Heart right ventricle (tissue), 16 donors: ENCODE measurements at regions of chrX and their contacts with region 1.

Region 1: GRCh38 chrX:110450050-110450449 is 91.4 kb downstream of the RTL9 start:
- DNase-seq: peak; percentile 28 to 58
- ATAC-seq: peak; percentile 79 to 92 (median 88)
- H3K4me3 ChIP-seq: no peak overlapping the region
- H3K27ac ChIP-seq: no peak overlapping the region
- H3K4me1 ChIP-seq: no peaks in the 10 kb centered on the region
- H3K27me3 ChIP-seq: peaks cover 0 to 52% (median 0%) of the 10 kb centered on the region in 7 donors
- CTCF ChIP-seq: peak in 8 of 9 donors; percentile 41 to 78 (median 68)

Region 2: DNA sequence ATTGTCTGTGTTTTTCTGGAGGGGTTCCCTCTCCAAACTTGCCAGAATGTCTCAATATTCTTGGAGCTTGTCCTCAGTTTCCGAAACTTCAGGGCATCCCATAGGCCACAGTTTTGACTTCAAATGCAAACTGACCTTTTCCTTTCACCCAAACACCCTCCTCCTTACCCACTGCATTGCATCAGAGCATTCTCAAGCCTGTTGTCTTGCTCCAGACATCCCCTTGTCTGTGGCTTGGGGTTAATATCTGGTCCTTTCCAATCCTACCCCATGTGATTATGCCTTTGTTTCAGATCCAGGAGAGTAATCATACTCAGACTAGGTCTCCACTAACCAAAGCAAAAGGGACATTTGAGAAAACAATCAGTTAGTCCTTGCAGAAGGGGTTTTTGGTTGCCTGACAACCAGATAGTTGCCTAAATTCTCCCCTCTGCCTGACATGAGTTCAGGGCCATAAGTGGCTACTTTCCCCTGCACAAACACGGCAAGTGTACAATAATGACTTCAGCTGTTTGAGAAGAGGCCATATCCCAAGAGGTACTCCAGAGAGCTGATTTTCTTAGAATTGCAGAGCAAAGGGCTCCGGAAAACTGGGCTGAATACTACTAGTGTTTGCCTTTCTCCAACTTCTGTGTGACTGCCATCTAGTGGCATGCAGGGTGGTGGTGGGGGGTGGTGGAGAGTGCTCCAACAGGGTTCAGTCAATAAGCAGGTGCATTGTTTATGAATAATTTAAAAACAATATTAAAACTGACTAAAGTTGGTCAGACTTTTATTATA is 215.4 kb after region 1 on chrX:
- intact Hi-C with region 1: loop called in 2 of 10 experiments (anchors 5 to 10 kb)
- DNase-seq: peak in 1 of 2 donors; percentile 10
- ATAC-seq: peak in 6 of 8 donors; percentile 29 to 68 (median 53)
- H3K4me3 ChIP-seq: no peak overlapping the region
- H3K27ac ChIP-seq: no peak overlapping the region
- H3K4me1 ChIP-seq: no peaks in the 10 kb centered on the region
- H3K27me3 ChIP-seq: peaks cover 0 to 21% (median 0%) of the 10 kb centered on the region in 7 donors
- CTCF ChIP-seq: peak in 7 of 9 donors; percentile 30 to 55 (median 35)

Region 3: DNA sequence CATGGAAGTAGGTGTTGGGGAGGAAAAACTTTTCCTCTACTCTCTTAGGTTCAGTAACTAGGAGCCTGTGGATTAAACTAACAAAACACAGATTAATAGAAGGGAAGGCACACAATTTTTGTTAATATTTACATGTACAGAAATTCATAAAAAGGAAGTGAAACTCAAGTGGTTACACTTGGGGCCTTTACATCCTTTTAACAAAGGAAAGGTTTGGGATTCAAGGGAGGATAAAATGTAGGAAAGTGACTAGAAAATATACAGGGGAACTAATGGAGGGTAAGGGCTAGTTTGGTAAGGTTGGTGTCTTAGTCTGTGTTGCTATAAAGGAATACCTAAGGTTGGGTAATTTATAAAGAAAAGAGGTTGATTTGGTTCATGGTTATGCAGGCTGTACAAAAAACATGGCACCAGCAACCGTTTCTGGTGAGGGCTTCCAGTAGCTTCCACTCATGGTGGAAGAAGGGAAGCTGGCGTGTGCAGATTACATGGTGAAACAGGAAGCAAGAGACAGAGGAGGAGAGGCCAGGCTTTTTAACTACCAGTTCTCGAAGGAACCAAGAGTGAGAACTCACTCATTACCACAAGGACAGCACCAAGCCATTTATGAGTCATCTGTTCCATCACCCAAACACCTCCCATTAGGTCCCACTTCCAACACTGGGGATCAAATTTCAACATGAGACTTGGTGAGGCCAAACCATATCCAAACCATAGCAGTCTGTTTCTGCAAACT is 221.2 kb after region 1 on chrX:
- intact Hi-C with region 1: loop called in 2 of 10 experiments (anchors 5 to 10 kb)
- DNase-seq: no peak
- ATAC-seq: no peak
- H3K4me3 ChIP-seq: no peak overlapping the region
- H3K27ac ChIP-seq: no peak overlapping the region
- H3K4me1 ChIP-seq: no peaks in the 10 kb centered on the region
- H3K27me3 ChIP-seq: peaks cover 0 to 11% (median 0%) of the 10 kb centered on the region in 7 donors
- CTCF ChIP-seq: no peak

Region 4: DNA sequence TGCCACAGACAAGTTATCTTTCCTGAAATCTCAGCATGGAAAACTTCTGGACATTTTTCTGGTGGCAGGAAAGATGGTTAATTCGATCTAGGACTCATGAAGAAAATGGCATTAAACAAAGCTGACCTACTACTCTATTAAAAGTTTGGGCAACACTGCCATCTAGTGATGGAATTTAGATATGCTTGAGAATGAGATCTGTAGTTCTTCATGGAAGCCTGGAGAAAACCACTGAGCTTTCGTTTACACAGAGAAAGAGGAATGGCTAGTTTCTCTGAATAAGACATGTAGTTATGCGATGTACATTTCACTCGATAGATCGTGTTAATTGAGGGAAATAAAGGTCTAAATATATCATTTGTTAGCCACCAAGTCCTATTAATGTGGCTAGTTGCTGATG is 397.3 kb after region 1 on chrX:
- intact Hi-C with region 1: loop called (anchors 1 to 5 kb)
- DNase-seq: peak in 1 of 2 donors; percentile 12
- ATAC-seq: peak in 5 of 8 donors; percentile 46 to 64 (median 51)
- H3K4me3 ChIP-seq: no peak overlapping the region
- H3K27ac ChIP-seq: no peak overlapping the region
- H3K4me1 ChIP-seq: no peaks in the 10 kb centered on the region
- H3K27me3 ChIP-seq: peaks cover 0 to 73% (median 0%) of the 10 kb centered on the region in 7 donors
- CTCF ChIP-seq: peak; percentile 33 to 75 (median 59)

Region 5: DNA sequence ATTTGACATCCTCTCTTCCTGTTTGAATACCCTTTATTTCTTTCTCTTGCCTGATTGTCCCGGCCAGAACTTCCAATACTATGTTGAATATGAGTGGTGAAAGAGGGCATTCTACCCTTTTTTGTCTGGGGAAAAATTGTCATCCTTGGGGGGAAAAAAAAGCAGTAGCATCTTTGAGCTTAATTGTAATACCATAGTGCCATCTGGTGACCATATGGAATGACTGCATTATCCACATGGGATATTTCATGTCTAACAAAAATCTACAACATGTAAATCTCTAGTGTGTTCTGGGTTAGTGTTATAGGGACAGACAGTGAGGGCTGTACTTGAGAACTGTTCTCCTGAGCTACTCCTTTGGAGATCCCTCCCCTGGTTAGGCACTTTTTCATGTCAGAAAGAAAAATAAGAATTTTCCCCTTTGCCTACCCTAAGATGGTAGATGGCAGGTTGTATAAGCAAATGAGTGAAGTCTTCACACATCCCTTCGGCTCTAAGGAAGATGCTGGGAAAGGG is 794.2 kb after region 1 on chrX:
- intact Hi-C with region 1: loop called in 1 of 10 experiments (anchors 10 kb)
- DNase-seq: no peak
- ATAC-seq: no peak
- H3K4me3 ChIP-seq: no peak overlapping the region
- H3K27ac ChIP-seq: no peak overlapping the region
- H3K4me1 ChIP-seq: no peaks in the 10 kb centered on the region
- H3K27me3 ChIP-seq: peaks cover 0 to 66% (median 0%) of the 10 kb centered on the region in 7 donors
- CTCF ChIP-seq: peak in 7 of 9 donors; percentile 31 to 54 (median 38)

Region 6: GRCh38 chrX:111254896-111255693 is 805.0 kb after region 1 on chrX:
- intact Hi-C with region 1: loop called in 1 of 10 experiments (anchors 10 kb)
- DNase-seq: no peak
- ATAC-seq: no peak
- H3K4me3 ChIP-seq: no peak overlapping the region
- H3K27ac ChIP-seq: no peak overlapping the region
- H3K4me1 ChIP-seq: no peaks in the 10 kb centered on the region
- H3K27me3 ChIP-seq: peaks cover 0 to 68% (median 0%) of the 10 kb centered on the region in 7 donors
- CTCF ChIP-seq: no peak